Transverse colon (tissue), 4 donors: ENCODE measurements at regions of chr17 and their contacts with region 1.

Region 1: GRCh38 chr17:77437017-77437416 is 296.2 kb downstream of the SEC14L1 start:
- DNase-seq: peak; percentile 42
- H3K4me3 ChIP-seq: no peak overlapping the region
- H3K27ac ChIP-seq: peak overlapping the region; percentile 25 to 94 (median 62)
- H3K4me1 ChIP-seq: peaks cover 62 to 91% (median 68%) of the 10 kb centered on the region in 4 donors
- H3K27me3 ChIP-seq: no peaks in the 10 kb centered on the region
- CTCF ChIP-seq: no peak
- EP300 ChIP-seq: no peak
- POLR2A ChIP-seq: no peak

Region 2: GRCh38 chr17:77394540-77395295 is 42.3 kb before region 1 on chr17:
- in situ Hi-C with region 1: no loop called
- intact Hi-C with region 1: loop called (anchors 1 kb)
- DNase-seq: peak; percentile 53
- H3K4me3 ChIP-seq: no peak overlapping the region
- H3K27ac ChIP-seq: peak overlapping the region; percentile 80 to 91 (median 88)
- H3K4me1 ChIP-seq: peaks cover 44 to 54% (median 51%) of the 10 kb centered on the region in 4 donors
- H3K27me3 ChIP-seq: no peaks in the 10 kb centered on the region
- CTCF ChIP-seq: no peak
- EP300 ChIP-seq: no peak
- POLR2A ChIP-seq: no peak